Stomach (tissue), 19 donors: ENCODE measurements at regions of chr5 and their contacts with region 1.

Region 1: DNA sequence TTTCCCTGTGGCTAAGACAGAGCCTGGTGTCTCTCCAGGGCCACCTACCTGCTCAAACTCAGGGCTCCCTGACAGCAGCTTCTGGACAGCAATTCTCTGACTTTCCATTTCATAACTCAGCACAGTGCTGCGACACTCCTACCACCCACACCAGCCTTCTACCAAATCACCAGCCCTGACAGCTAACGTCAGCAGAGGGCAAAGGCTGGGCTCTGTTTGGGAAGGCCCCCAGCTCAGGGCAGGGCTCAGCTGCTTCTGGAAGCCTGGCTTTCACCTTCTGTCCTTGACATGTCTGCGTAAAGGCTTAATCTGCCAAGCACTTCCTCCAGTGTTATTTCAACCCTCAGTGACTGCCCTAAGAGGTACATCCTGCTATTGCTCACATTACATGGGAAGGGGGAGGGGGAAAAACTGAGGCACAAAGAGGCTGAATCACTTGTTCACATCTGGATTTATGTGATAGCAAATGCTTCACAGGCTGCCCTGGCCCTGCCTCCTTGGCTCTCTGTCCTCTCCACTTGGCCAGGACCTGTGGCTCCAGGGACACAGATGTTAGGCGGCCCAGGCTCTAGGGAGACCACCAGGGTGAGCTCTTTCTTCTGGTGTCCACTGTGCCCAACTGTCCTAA is 102.5 kb upstream of the PANK3 start:
- DNase-seq: peak in 1 of 2 donors; percentile 55
- H3K4me3 ChIP-seq: no peak overlapping the region
- H3K27ac ChIP-seq: peak overlapping the region in 3 of 5 donors; percentile 41 to 69 (median 50)
- H3K4me1 ChIP-seq: peaks cover 0 to 23% (median 5%) of the 10 kb centered on the region in 4 donors
- H3K27me3 ChIP-seq: no peaks in the 10 kb centered on the region
- CTCF ChIP-seq: no peak
- EP300 ChIP-seq: peak; percentile 67
- POLR2A ChIP-seq: no peak

Region 2: GRCh38 chr5:169302491-169303118 is 620.9 kb after region 1 on chr5:
- intact Hi-C with region 1: loop called (anchors 10 kb)
- DNase-seq: peak; percentile 74 to 93
- H3K4me3 ChIP-seq: no peak overlapping the region
- H3K27ac ChIP-seq: no peak overlapping the region
- H3K4me1 ChIP-seq: peaks cover 7 to 42% (median 29%) of the 10 kb centered on the region in 4 donors
- H3K27me3 ChIP-seq: peaks cover 0 to 74% (median 12%) of the 10 kb centered on the region in 3 donors
- CTCF ChIP-seq: peak in 5 of 7 experiments; percentile 74 to 91 (median 88)
- EP300 ChIP-seq: no peak
- POLR2A ChIP-seq: no peak

Region 3: GRCh38 chr5:169583424-169584204 is 901.9 kb after region 1 on chr5 and contains the start of gene SPDL1:
- intact Hi-C with region 1: loop called (anchors 10 kb)
- DNase-seq: peak; percentile 95 to 99
- H3K4me3 ChIP-seq: peak within 1 kb of the TSS; percentile 68 to 85 (median 76)
- H3K27ac ChIP-seq: peak within 1 kb of the TSS; percentile 52 to 86 (median 83)
- H3K4me1 ChIP-seq: peaks cover 3 to 22% (median 14%) of the 10 kb centered on the region in 4 donors
- H3K27me3 ChIP-seq: no peaks in the 10 kb centered on the region
- CTCF ChIP-seq: peak in 1 of 7 experiments; percentile 29
- EP300 ChIP-seq: no peak
- POLR2A ChIP-seq: peak in 1 of 4 donors; percentile 37
- total RNA-seq, gene SPDL1: 4.8 to 140 (median 13.6) TPM